ENCODE measurements at regions of chr4 and their contacts with region 1.

Region 1: DNA sequence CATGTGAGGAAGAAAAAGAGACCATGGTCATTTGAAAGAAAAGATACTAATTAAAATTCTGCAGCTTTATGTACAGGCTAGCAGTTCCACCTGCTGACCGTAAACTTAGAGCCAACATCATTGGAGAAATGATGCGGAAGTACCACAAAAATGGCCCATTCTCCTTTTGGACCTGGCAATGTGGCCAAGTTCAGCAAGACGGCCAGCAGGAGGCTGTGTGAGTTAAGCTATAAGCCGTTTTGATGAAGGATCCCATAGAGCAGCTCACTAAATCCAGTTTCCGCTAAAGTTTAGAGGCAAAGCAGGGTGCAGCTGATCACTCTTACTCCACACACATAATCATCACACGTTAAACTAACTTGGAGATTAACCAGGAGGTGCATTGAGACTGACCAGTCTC is 133.8 kb downstream of the LDB2 start:
- DNase-seq: peak; percentile 57
- ATAC-seq: peak; percentile 86
- H3K4me3 Mint-ChIP-seq: no peak overlapping the region
- H3K27ac Mint-ChIP-seq: no peak overlapping the region
- H3K4me1 Mint-ChIP-seq: peaks cover 38% of the 10 kb centered on the region
- H3K27me3 Mint-ChIP-seq: no peaks in the 10 kb centered on the region
- CTCF ChIP-seq: peak; percentile 50; the same call in 1 of the 2 replicates

Region 2: GRCh38 chr4:16959305-16959704 is 194.7 kb after region 1 on chr4:
- CTCF ChIA-PET with region 1: interaction called, 11 read pairs
- POLR2A ChIA-PET with region 1: no interaction called
- DNase-seq: no peak
- ATAC-seq: peak; percentile 30
- H3K4me3 Mint-ChIP-seq: no peak overlapping the region
- H3K27ac Mint-ChIP-seq: peak overlapping the region; percentile 44
- H3K4me1 Mint-ChIP-seq: peaks cover 35% of the 10 kb centered on the region
- H3K27me3 Mint-ChIP-seq: peaks cover 4% of the 10 kb centered on the region; the same call in 1 of the 2 replicates
- CTCF ChIP-seq: no peak

Region 3: DNA sequence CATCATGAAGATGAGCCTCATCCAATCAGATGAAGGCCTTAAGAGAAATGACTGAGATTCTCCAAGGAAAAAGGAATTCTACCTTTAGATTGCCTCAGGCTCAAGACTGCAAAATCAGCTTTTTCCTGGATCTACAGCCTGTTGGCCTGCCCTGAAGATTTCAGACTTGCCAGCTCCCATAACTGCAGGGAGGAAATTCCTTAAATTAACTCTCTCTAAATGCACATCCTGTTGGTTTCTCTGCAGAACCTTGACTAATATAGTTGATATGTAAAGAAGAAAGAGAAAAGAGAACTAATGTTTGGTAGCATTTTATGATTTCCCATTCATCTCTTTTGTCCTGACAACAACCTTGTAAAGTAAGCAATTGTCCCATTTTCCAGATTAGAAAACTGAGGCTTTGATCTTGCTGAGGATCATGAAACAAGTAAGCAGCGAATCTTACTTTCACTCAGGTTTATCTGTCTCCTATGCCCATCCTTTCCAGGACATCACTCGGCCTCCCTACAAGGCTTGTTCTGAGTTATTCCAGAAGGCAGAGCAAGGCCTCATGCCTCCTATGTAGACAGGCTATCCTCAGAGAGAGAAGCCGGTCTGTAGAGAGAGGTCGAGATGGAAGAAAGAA is 248.9 kb after region 1 on chr4:
- CTCF ChIA-PET with region 1: no interaction called
- POLR2A ChIA-PET with region 1: no interaction called
- DNase-seq: no peak
- ATAC-seq: no peak
- H3K4me3 Mint-ChIP-seq: no peak overlapping the region
- H3K27ac Mint-ChIP-seq: no peak overlapping the region
- H3K4me1 Mint-ChIP-seq: peaks cover 40% of the 10 kb centered on the region
- H3K27me3 Mint-ChIP-seq: no peaks in the 10 kb centered on the region
- CTCF ChIP-seq: no peak

Region 4: DNA sequence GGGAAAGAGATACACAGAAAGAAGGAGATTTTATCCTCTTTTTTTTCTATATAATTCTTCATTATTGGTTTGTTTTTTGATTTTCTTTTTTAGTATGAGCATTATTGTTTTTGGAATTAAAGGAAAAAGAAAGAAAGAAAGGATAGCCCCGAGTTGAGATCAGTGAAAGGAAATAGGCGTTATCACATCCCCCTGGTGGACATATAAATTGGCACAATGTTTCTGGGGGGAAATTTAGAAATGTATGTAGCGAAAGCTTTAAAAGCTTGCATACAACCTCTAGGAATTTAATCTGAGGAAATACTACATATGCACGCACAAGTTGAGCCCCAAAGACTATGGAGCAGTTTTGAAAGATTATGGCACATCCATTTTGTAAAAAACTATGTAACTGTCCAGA is 360.1 kb after region 1 on chr4:
- CTCF ChIA-PET with region 1: no interaction called
- POLR2A ChIA-PET with region 1: no interaction called
- DNase-seq: no peak
- ATAC-seq: no peak
- H3K4me3 Mint-ChIP-seq: no peak overlapping the region
- H3K27ac Mint-ChIP-seq: no peak overlapping the region
- H3K4me1 Mint-ChIP-seq: peaks cover 18% of the 10 kb centered on the region
- H3K27me3 Mint-ChIP-seq: peaks cover 2% of the 10 kb centered on the region; the same call in 1 of the 2 replicates
- CTCF ChIP-seq: 0 out of 2 replicates have a peak, but pooled peaks have one; percentile 14